Calu3 (cell line): ENCODE measurements at regions of chr6 and their contacts with region 1.

Region 1: GRCh38 chr6:164927288-164928056 is 381.9 kb downstream of the C6orf118 start:
- DNase-seq: peak; percentile 79
- H3K4me3 Mint-ChIP-seq: no peak overlapping the region
- H3K27ac Mint-ChIP-seq: no peak overlapping the region
- H3K4me1 Mint-ChIP-seq: no peaks in the 10 kb centered on the region
- H3K27me3 Mint-ChIP-seq: no peaks in the 10 kb centered on the region
- CTCF ChIP-seq: peak; percentile 91

Region 2: GRCh38 chr6:163180874-163181541 is 1746.5 kb before region 1 on chr6:
- CTCF ChIA-PET with region 1: no interaction called
- intact Hi-C with region 1: loop called (anchors 10 kb)
- DNase-seq: peak; percentile 84
- H3K4me3 Mint-ChIP-seq: no peak overlapping the region
- H3K27ac Mint-ChIP-seq: peak overlapping the region; percentile 97
- H3K4me1 Mint-ChIP-seq: peaks cover 23% of the 10 kb centered on the region
- H3K27me3 Mint-ChIP-seq: no peaks in the 10 kb centered on the region
- CTCF ChIP-seq: peak; percentile 74

Region 3: GRCh38 chr6:163572612-163573011 is 1354.9 kb before region 1 on chr6:
- CTCF ChIA-PET with region 1: no interaction called
- intact Hi-C with region 1: loop called (anchors 5 kb)
- DNase-seq: peak; percentile 34
- H3K4me3 Mint-ChIP-seq: peak overlapping the region; percentile 7
- H3K27ac Mint-ChIP-seq: peak overlapping the region; percentile 82
- H3K4me1 Mint-ChIP-seq: peaks cover 31% of the 10 kb centered on the region
- H3K27me3 Mint-ChIP-seq: no peaks in the 10 kb centered on the region
- CTCF ChIP-seq: no peak

Region 4: DNA sequence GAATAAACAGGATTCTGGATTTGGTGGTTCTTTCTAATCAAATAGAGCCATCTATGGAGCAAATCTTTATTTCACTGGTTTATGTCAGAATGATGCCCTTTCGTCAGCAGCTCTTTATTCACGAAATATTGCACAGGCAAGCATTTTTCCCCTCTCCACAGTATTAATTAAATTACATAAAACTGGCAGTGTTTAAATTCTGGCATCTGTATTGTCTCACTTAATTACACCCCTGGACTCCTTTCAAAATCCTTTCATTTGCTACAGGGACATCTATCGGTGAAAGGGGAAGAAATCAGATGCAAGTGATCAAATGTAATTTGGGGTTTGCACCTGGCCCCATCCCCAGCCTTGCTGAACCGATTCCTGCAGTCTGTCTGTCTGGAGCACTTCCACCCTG is 711.1 kb before region 1 on chr6:
- CTCF ChIA-PET with region 1: no interaction called
- intact Hi-C with region 1: loop called (anchors 5 kb)
- DNase-seq: no peak
- H3K4me3 Mint-ChIP-seq: no peak overlapping the region
- H3K27ac Mint-ChIP-seq: no peak overlapping the region
- H3K4me1 Mint-ChIP-seq: no peaks in the 10 kb centered on the region
- H3K27me3 Mint-ChIP-seq: no peaks in the 10 kb centered on the region
- CTCF ChIP-seq: no peak

Region 5: DNA sequence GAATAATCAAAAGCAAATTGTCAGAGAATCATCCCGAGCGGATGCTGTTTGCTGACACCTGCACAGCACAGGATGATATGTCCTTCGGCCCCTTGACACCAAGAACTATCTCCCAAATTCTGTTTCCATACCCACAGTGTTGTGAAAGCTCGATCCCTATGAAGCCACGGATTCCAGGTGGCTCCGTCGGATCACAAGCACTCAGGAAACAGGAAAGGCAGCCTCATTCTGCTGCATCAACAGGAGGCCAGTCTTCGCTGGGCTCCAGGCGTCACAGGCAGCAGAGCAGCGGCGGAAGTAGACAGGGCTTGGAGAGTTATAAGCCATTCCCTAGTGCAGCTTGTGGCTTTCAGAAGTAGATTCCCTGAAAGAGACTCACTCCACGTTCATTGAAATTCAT is 39.6 kb after region 1 on chr6:
- CTCF ChIA-PET with region 1: no interaction called
- intact Hi-C with region 1: no loop called
- DNase-seq: no peak
- H3K4me3 Mint-ChIP-seq: no peak overlapping the region
- H3K27ac Mint-ChIP-seq: no peak overlapping the region
- H3K4me1 Mint-ChIP-seq: no peaks in the 10 kb centered on the region
- H3K27me3 Mint-ChIP-seq: no peaks in the 10 kb centered on the region
- CTCF ChIP-seq: no peak

Region 6: GRCh38 chr6:165049364-165049763 is 121.9 kb after region 1 on chr6:
- CTCF ChIA-PET with region 1: no interaction called
- intact Hi-C with region 1: loop called (anchors 5 kb)
- DNase-seq: peak; percentile 56
- H3K4me3 Mint-ChIP-seq: no peak overlapping the region
- H3K27ac Mint-ChIP-seq: no peak overlapping the region
- H3K4me1 Mint-ChIP-seq: no peaks in the 10 kb centered on the region
- H3K27me3 Mint-ChIP-seq: no peaks in the 10 kb centered on the region
- CTCF ChIP-seq: peak; percentile 68

Region 7: GRCh38 chr6:165181951-165182414 is 254.5 kb after region 1 on chr6:
- CTCF ChIA-PET with region 1: no interaction called
- intact Hi-C with region 1: no loop called
- DNase-seq: peak; percentile 55
- H3K4me3 Mint-ChIP-seq: no peak overlapping the region
- H3K27ac Mint-ChIP-seq: peak overlapping the region; percentile 67
- H3K4me1 Mint-ChIP-seq: peaks cover 51% of the 10 kb centered on the region
- H3K27me3 Mint-ChIP-seq: no peaks in the 10 kb centered on the region
- CTCF ChIP-seq: no peak